ENCODE measurements at regions of chr6 and their contacts with region 1.

Region 1: DNA sequence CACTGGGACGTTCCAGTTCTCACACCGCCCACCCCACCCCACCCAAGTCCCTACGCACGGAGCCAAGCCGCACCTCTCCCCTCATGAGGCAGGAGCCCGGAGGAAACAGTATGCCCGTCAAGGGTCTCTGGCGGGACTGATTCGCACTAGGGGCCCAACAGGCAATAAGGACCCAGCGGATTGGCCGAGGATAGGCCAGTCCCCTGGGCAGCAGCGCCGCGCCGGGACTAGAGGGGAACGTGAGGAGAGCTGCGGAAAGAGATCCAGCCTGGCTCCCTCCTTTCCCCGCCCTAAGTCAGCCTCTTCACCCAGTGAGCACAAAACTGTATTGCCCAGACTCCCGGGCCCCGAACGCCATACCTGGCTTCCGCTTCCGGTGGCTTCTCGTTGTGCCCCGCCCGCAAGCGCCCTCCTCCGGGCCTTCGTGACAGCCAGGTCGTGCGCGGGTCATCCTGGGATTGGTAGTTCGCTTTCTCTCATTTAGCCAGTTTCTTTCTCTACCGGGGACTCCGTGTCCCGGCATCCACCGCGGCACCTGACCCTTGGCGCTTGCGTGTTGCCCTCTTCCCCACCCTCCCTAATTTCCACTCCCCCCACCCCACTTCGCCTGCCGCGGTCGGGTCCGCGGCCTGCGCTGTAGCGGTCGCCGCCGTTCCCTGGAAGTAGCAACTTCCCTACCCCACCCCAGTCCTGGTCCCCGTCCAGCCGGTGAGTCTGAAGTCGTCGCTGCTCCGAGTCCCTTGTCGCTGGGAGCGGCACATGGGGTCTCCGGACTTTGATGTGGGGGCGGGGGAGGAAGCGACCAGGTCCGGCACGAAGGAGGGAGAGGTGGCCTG is at the start of gene CSNK2B:
- DNase-seq: peak; percentile 100
- total RNA-seq, gene CSNK2B: 96.3 TPM

Region 2: DNA sequence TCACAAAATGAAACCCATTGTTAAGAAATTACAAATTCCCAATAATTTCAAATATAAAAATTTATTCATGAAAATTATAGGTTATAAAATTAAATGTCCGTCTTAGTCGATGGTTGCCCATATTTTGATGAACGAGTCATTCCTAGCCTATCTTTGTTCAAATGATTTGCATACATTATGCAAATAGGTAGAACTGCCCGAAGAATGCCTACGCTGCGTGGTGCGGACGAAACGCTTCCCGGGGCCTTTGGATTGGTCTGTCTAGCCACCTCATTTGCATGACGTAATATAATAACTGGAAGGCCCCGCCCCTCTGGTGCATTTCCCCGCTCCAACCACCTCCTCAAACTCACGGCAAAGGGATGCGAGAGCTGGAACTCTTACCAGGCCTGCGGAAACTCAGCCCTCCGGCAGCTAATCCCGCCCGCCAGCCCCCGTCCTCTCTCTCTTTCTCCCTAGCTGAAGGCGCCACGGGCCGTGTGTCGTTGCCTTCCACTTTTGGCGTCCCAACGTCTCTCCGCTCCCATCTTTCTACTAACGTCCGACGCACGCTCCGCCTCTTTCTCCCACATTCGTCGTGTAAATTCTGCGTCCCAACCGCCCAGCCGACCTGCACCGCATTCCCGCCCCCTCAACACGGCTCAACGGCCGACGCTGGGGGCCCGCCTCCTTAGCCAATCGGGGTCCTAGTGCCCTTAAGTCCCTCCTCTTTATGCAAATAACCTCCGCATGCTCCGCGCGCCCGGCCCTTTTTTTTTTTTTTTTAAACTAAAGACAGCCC is 45.7 kb before region 1 on chr6:
- intact Hi-C with region 1: loop called (anchors 2 kb)
- DNase-seq: peak; percentile 98

Region 3: GRCh38 chr6:31652925-31653718 is 12.6 kb before region 1 on chr6:
- intact Hi-C with region 1: loop called (anchors 1 kb)
- DNase-seq: peak; percentile 93

Measured in cardiac septum (tissue), 1 donor.